Gastrocnemius medialis (tissue), 4 donors: ENCODE measurements at regions of chr20 and their contacts with region 1.

Region 1: GRCh38 chr20:19130081-19130984 is 82.1 kb upstream of the SLC24A3 start:
- DNase-seq: no peak
- ATAC-seq: no peak
- H3K4me3 ChIP-seq: no peak overlapping the region
- H3K27ac ChIP-seq: no peak overlapping the region
- H3K4me1 ChIP-seq: no peaks in the 10 kb centered on the region
- H3K27me3 ChIP-seq: no peaks in the 10 kb centered on the region
- CTCF ChIP-seq: no peak
- POLR2A ChIP-seq: no peak

Region 2: GRCh38 chr20:19026121-19026878 is 104.0 kb before region 1 on chr20:
- in situ Hi-C with region 1: loop called in 1 of 4 experiments (anchors 25 kb)
- intact Hi-C with region 1: no loop called
- DNase-seq: no peak
- ATAC-seq: peak in 1 of 2 donors; percentile 30
- H3K4me3 ChIP-seq: no peak overlapping the region
- H3K27ac ChIP-seq: no peak overlapping the region
- H3K4me1 ChIP-seq: peaks cover 5 to 9% of the 10 kb centered on the region in 2 donors
- H3K27me3 ChIP-seq: no peaks in the 10 kb centered on the region
- CTCF ChIP-seq: no peak
- POLR2A ChIP-seq: no peak

Region 3: DNA sequence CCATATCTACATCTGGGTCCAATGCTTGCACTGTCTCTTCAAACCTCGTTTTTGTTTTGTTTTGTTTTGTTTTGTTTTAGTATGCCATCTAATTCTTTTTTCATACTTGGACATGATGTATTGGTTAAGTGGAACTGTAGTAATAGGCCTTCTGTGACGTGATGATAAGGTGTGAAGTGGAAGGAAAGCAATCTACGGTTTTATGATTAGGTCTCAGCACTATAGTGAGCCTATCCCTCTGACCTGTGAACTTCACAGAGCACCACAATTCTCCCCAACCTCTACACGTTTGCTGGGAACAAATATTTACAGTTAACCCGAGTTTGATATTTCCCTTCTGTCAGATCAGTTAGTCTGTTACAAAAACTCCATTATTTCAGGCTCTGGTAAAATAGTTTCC is 63.0 kb after region 1 on chr20:
- in situ Hi-C with region 1: no loop called
- intact Hi-C with region 1: no loop called
- DNase-seq: no peak
- ATAC-seq: no peak
- H3K4me3 ChIP-seq: no peak overlapping the region
- H3K27ac ChIP-seq: no peak overlapping the region
- H3K4me1 ChIP-seq: no peaks in the 10 kb centered on the region
- H3K27me3 ChIP-seq: no peaks in the 10 kb centered on the region
- CTCF ChIP-seq: no peak
- POLR2A ChIP-seq: no peak